Posterior vena cava (tissue), 2 donors: ENCODE measurements at regions of chr1 and their contacts with region 1.

Region 1: DNA sequence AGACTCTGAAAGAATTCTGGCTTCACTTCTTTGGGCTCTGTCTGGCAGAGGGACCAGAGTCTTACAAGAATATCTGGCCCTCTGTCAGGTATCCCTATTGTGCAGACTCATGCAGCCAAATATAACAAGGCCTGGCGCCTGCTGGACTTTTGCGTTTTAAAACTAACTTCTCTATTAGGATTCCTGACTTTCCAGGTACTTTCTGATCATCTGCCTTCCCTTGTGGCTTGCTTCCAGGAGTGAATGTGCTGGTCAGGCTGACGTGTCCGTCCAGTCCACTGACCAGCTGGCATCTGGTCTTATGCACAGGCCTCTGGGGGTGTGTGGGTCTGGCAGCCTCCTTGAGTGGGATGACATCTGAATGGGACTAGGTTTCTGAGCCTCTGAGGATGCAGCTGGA is 8.6 kb upstream of the RAB29 start:
- DNase-seq: no peak

Region 2: GRCh38 chr1:205711104-205712020 is 72.5 kb before region 1 on chr1:
- intact Hi-C with region 1: no loop called
- DNase-seq: no peak

Region 3: DNA sequence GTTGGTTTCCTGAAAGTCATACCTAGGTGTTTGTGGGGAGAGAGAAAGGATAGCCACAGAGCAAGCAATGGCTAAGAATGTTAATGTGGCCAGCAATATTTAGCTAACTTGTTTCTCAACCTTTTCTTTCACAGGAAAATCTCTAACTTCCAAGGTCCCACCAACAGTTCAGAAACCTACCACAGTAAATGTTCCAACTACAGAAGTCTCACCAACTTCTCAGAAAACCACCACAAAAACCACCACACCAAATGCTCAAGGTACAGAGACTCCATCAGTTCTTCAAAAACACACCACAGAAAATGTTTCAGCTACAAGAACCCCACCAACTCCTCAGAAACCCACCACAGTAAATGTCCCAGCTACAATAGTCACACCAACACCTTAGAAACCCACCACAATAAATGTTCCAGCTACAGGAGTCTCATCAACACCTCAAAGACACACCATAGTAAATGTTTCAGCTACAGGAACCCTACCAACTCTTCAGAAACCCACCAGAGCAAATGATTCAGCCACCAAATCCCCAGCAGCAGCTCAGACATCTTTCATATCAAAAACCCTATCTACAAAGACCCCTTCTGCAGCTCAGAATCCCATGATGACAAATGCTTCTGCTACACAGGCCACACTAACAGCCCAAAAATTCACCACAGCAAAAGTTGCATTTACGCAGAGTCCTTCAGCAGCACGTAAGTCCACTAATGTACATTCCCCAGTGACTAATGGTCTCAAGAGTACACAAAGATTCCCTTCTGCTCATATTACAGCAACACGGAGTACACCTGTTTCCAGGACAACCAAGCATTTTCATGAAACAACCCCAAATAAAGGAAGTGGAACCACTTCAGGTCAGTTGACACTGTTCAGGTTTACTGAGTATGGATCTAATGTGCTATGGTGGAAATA is 1552.9 kb after region 1 on chr1:
- intact Hi-C with region 1: loop called in 1 of 2 experiments (anchors 10 kb)
- DNase-seq: no peak